ENCODE measurements at regions of chr20 and their contacts with region 1.

Region 1: DNA sequence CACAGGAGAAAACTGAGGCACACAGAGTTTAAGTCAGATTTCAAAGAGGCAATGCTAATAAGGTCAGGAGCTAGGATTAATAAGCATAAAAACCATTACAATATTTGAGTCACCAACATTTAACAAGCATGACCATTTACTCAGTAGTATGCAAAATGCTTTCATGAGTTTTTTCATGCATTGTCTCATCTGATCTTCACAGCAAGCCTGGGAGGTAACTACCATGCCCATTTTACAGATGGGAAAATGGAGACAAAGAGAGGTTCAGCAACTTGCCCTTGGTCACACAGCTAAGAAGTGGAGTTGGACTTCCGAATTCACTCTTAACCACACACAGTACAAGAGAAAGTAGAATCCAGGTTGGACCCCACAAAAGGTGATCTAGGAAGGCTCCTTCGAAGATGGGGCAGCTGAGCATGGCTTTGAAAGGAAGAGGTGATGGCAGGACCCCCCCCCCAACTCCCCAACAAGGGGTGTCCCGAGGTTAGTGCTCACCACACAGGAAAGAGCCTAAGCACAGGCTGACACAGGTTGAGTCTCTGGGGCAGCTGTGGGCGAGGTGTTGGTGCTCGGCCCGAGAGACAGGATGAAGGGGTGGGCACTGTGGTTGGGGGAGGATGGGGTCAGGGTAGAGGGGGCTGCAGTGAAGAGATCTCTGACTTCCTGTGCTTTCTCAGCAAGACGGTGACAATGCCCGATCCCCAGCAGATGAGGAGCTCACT is 108.8 kb downstream of the PREX1 start:
- DNase-seq: peak; percentile 82
- ATAC-seq: peak; percentile 45
- H3K4me3 Mint-ChIP-seq: peak overlapping the region; percentile 65
- H3K27ac Mint-ChIP-seq: peak overlapping the region; percentile 89
- H3K4me1 Mint-ChIP-seq: peaks cover 98% of the 10 kb centered on the region
- H3K27me3 Mint-ChIP-seq: no peaks in the 10 kb centered on the region

Region 2: GRCh38 chr20:48635433-48636310 is 83.3 kb before region 1 on chr20:
- CTCF ChIA-PET with region 1: no interaction called
- POLR2A ChIA-PET with region 1: no interaction called
- DNase-seq: peak; percentile 66
- ATAC-seq: peak; percentile 66
- H3K4me3 Mint-ChIP-seq: no peak overlapping the region
- H3K27ac Mint-ChIP-seq: peak overlapping the region; percentile 71
- H3K4me1 Mint-ChIP-seq: peaks cover 26% of the 10 kb centered on the region
- H3K27me3 Mint-ChIP-seq: no peaks in the 10 kb centered on the region

Region 3: DNA sequence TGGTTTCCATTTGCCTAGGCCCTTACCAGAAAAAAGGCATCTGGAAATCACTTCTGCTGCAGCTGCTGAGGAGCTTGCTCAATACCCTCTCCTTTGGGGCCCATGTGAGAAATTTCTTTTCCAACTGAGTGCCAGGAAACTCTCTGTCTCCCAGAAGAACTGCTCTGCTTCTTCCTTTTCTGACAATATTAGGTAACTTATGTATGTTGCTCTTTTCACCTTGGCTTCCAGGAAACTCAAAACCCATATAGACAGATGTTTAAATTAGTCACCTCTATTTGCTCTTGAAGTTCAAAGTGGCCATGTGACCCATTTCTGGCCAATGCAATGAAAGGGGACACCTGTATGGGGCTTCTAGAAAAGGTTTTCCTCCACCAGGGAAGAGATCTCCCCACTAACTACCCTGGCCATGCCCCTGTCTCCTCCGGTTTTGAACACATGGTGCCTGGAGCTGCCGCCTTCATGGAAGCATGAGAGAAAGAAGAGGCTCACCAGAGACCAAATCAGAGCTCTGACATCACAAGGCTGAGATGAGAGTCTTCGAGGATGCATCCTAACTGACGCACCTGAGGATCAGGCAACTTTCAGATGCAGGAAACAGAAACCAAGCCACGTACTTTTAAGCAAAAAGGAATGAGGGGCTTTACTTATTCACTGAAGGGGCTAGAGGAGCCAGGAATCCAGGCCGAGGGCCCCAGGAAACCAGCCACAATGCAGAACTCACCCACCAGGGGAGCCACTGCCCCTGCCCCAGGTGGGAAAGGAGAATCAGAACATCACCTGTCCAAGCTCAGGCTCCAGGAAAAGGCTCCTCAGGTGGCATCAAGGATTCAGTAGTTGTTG is 12.6 kb before region 1 on chr20:
- CTCF ChIA-PET with region 1: interaction called, 30 read pairs
- POLR2A ChIA-PET with region 1: interaction called, 10 read pairs
- DNase-seq: no peak
- ATAC-seq: no peak
- H3K4me3 Mint-ChIP-seq: no peak overlapping the region
- H3K27ac Mint-ChIP-seq: peak overlapping the region; percentile 85
- H3K4me1 Mint-ChIP-seq: peaks cover 73% of the 10 kb centered on the region
- H3K27me3 Mint-ChIP-seq: no peaks in the 10 kb centered on the region

Region 4: DNA sequence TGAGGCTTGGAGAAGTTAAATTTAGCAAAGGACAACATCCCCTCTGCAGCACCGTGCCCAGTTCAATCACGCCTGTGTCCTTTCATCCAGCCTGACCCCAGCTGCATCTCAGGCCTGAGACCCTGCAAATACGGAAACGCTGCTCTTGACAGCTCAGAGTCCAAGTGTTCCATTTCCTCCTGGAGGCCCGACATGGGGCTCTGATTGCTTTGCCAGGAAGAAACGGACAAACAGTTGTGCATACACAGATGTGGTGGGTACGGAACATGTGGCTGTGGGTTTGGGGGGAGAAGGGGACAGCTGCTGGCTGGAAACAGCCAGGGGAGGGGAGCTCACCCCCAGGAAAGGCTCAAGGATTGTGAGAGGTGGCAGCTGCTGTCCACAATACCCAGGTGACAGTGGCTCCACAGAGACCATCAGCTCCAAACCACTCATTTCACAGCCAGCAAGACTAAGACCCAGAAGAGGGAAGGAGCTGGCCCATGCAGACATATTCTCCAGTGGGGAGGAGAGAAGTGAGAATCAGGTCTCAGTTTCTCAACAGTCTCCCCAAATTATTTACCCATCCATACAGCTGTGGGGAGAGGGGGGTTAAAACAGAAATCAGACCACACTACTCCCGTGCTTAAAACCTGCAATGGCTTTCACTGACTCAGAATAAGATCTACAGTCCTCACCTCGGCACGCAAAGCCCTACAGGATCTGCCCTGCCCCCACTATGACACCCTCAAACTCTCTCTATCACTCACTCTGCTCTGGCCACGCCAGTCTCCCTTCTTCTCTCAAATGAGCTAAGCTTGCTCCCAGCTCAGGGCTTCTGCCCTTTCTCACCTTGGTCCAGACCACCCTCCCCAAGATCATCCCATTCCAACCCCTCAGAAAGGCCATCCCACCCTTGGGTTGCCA is 19.6 kb after region 1 on chr20:
- CTCF ChIA-PET with region 1: interaction called, 18 read pairs
- POLR2A ChIA-PET with region 1: interaction called, 23 read pairs
- DNase-seq: peak; percentile 91
- ATAC-seq: peak; percentile 87
- H3K4me3 Mint-ChIP-seq: peak overlapping the region; percentile 45
- H3K27ac Mint-ChIP-seq: peak overlapping the region; percentile 89
- H3K4me1 Mint-ChIP-seq: peaks cover 83% of the 10 kb centered on the region
- H3K27me3 Mint-ChIP-seq: no peaks in the 10 kb centered on the region

Region 5: DNA sequence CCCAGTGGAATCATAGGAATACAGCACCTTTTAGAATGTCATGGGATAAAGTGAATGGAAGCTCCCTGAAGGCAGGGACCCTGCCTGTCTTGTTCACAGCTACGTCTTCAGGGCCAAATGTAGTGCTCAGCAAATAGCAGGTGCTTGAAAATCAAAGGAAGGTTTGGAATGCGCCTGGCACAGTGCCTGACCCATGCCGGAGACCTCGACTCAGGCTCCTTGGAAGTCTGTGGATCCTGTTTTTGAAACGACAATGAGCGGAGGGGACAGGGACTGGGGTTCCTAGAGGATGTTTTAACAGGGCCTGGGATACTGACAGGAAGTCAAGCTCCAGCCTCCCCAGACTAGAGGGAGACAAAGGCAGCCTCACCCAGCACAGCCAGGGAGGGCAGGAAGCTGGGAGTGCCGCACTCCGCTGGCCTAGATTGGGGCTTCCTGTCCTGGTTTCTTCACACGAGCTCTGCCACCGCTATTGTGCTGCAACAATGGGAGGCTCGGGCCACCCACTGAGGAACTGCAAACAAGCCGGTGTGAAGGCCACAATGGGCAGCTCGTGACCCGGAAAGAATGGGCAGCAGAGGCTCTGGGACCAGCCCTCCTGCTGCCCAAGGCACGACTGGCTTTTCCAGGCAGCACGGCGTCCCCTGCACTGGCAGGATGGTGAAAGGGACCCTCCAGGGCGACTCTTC is 32.1 kb after region 1 on chr20:
- CTCF ChIA-PET with region 1: interaction called, 11 read pairs
- POLR2A ChIA-PET with region 1: interaction called, 4 read pairs
- DNase-seq: peak; percentile 70
- ATAC-seq: peak; percentile 83
- H3K4me3 Mint-ChIP-seq: peak overlapping the region; percentile 42
- H3K27ac Mint-ChIP-seq: peak overlapping the region; percentile 87
- H3K4me1 Mint-ChIP-seq: peaks cover 78% of the 10 kb centered on the region
- H3K27me3 Mint-ChIP-seq: no peaks in the 10 kb centered on the region

Region 6: GRCh38 chr20:48797275-48797825 is 78.3 kb after region 1 on chr20:
- CTCF ChIA-PET with region 1: no interaction called
- POLR2A ChIA-PET with region 1: no interaction called
- DNase-seq: no peak
- ATAC-seq: no peak
- H3K4me3 Mint-ChIP-seq: no peak overlapping the region
- H3K27ac Mint-ChIP-seq: peak overlapping the region; percentile 16
- H3K4me1 Mint-ChIP-seq: peaks cover 62% of the 10 kb centered on the region
- H3K27me3 Mint-ChIP-seq: no peaks in the 10 kb centered on the region

Region 7: DNA sequence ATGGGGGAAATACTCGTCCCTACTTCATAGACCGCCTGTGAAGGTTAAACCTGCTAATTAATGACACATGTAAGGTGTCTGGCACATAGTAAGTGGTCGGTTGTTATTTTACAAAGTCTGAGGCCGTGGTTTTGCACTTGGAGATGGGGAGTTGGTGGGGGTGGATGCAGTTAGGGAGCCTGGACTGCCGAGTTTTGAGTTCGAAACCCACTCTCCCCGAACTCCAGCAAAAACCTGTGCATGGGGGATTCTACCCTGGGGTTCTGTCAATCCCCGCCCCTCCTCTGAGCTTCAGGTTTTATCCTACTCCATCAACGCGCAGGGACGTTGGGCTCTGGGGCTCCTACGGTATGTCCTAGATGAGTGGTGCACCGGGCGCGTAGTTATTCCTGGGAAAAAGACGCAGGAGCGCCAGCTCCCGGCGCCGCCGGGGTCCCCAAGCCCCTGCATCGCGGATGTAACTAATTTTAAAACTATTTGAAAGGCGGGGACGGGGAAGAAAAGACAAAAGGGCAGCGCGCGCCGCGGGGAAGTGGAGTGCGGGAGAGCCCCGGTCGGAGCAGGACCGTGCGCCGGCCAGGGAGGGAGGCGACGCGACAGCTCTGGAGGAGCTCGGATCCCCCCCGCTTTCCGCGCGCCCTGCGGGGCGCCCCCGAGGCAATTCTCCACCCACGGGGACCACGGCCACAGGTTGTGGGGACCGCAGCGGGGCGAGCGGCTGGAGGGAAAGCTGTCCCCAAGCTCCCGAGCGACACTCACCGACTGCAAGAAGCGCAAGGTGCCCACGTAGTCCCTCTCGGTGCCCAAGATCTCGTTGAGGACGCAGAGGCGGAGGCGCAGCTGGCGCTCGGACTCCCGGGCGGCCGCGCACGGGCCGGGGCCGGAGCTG is 108.1 kb after region 1 on chr20:
- CTCF ChIA-PET with region 1: interaction called, 6 read pairs
- POLR2A ChIA-PET with region 1: interaction called, 13 read pairs
- DNase-seq: peak; percentile 44
- ATAC-seq: peak; percentile 33
- H3K4me3 Mint-ChIP-seq: peak overlapping the region; percentile 91
- H3K27ac Mint-ChIP-seq: peak overlapping the region; percentile 88
- H3K4me1 Mint-ChIP-seq: peaks cover 10% of the 10 kb centered on the region
- H3K27me3 Mint-ChIP-seq: peaks cover 3% of the 10 kb centered on the region